Naive thymus-derived CD4-positive, alpha-beta T cell (primary cell): ENCODE measurements at regions of chr10 and their contacts with region 1.

Region 1: GRCh38 chr10:79487296-79488194 is 24.8 kb upstream of the EIF5AL1 start:
- DNase-seq: peak in 4 of 9 donors; percentile 10 to 29 (median 12)
- ATAC-seq: peak; percentile 62
- H3K4me3 ChIP-seq: no peak overlapping the region
- H3K4me3 Mint-ChIP-seq: no peak overlapping the region
- H3K27ac ChIP-seq: no peak overlapping the region
- H3K27ac Mint-ChIP-seq: no peak overlapping the region
- H3K4me1 ChIP-seq: no peaks in the 10 kb centered on the region
- H3K4me1 Mint-ChIP-seq: peaks cover 0 to 4% (median 0%) of the 10 kb centered on the region in 7 donors
- H3K27me3 ChIP-seq: no peaks in the 10 kb centered on the region
- H3K27me3 Mint-ChIP-seq: peaks cover 0 to 9% (median 0%) of the 10 kb centered on the region in 5 donors

Region 2: GRCh38 chr10:79374312-79375191 is 113.0 kb before region 1 on chr10:
- CTCF ChIA-PET with region 1: interaction called, 18 read pairs
- POLR2A ChIA-PET with region 1: no interaction called
- intact Hi-C with region 1: loop called (anchors 1 kb)
- DNase-seq: peak; percentile 39 to 78 (median 67)
- ATAC-seq: peak; percentile 85
- H3K4me3 ChIP-seq: no peak overlapping the region
- H3K4me3 Mint-ChIP-seq: no peak overlapping the region
- H3K27ac ChIP-seq: no peak overlapping the region
- H3K27ac Mint-ChIP-seq: peak overlapping the region in 1 of 9 donors; percentile 42
- H3K4me1 ChIP-seq: peaks cover 0 to 5% of the 10 kb centered on the region in 2 donors
- H3K4me1 Mint-ChIP-seq: peaks cover 0 to 11% (median 4%) of the 10 kb centered on the region in 7 donors
- H3K27me3 ChIP-seq: no peaks in the 10 kb centered on the region
- H3K27me3 Mint-ChIP-seq: peaks cover 0 to 30% (median 0%) of the 10 kb centered on the region in 5 donors